ENCODE measurements at regions of chr11 and their contacts with region 1.

Region 1: GRCh38 chr11:35815556-35816315 is 128.1 kb upstream of the LDLRAD3 start:
- DNase-seq: no peak
- H3K4me3 ChIP-seq: no peak overlapping the region
- H3K27ac ChIP-seq: no peak overlapping the region
- H3K4me1 ChIP-seq: peaks cover 12% of the 10 kb centered on the region
- H3K27me3 ChIP-seq: no peaks in the 10 kb centered on the region
- CTCF ChIP-seq: no peak
- POLR2A ChIP-seq: no peak

Region 2: GRCh38 chr11:36265793-36266628 is 450.3 kb after region 1 on chr11:
- intact Hi-C with region 1: loop called (anchors 10 kb)
- DNase-seq: no peak
- H3K4me3 ChIP-seq: no peak overlapping the region
- H3K27ac ChIP-seq: no peak overlapping the region
- H3K4me1 ChIP-seq: no peaks in the 10 kb centered on the region
- H3K27me3 ChIP-seq: no peaks in the 10 kb centered on the region
- CTCF ChIP-seq: peak; percentile 25 to 82 (median 81)
- POLR2A ChIP-seq: no peak